Left ventricle myocardium inferior (tissue), 1 donor: ENCODE measurements at regions of chr1 and their contacts with region 1.

Region 1: GRCh38 chr1:198088360-198089071 is 68.3 kb upstream of the NEK7 start:
- DNase-seq: no peak
- H3K4me3 ChIP-seq: no peak overlapping the region
- H3K27ac ChIP-seq: no peak overlapping the region
- H3K4me1 ChIP-seq: no peaks in the 10 kb centered on the region
- H3K27me3 ChIP-seq: no peaks in the 10 kb centered on the region
- CTCF ChIP-seq: peak; percentile 72

Region 2: GRCh38 chr1:197775282-197776262 is 312.9 kb before region 1 on chr1 and contains the start of gene DENND1B:
- intact Hi-C with region 1: no loop called
- DNase-seq: peak; percentile 74
- H3K4me3 ChIP-seq: peak within 1 kb of the TSS; percentile 81
- H3K27ac ChIP-seq: peak within 1 kb of the TSS; percentile 96
- H3K4me1 ChIP-seq: peaks cover 52% of the 10 kb centered on the region
- H3K27me3 ChIP-seq: no peaks in the 10 kb centered on the region
- CTCF ChIP-seq: peak; percentile 15
- total RNA-seq, gene DENND1B: 26.9 TPM

Region 3: GRCh38 chr1:198175423-198176170 is 87.1 kb after region 1 on chr1:
- intact Hi-C with region 1: no loop called
- DNase-seq: no peak
- H3K4me3 ChIP-seq: no peak overlapping the region
- H3K27ac ChIP-seq: peak overlapping the region; percentile 15
- H3K4me1 ChIP-seq: peaks cover 100% of the 10 kb centered on the region
- H3K27me3 ChIP-seq: no peaks in the 10 kb centered on the region
- CTCF ChIP-seq: no peak

Region 4: GRCh38 chr1:198359024-198359653 is 270.6 kb after region 1 on chr1:
- intact Hi-C with region 1: loop called (anchors 5 kb)
- DNase-seq: no peak
- H3K4me3 ChIP-seq: no peak overlapping the region
- H3K27ac ChIP-seq: no peak overlapping the region
- H3K4me1 ChIP-seq: no peaks in the 10 kb centered on the region
- H3K27me3 ChIP-seq: no peaks in the 10 kb centered on the region
- CTCF ChIP-seq: peak; percentile 66

Region 5: GRCh38 chr1:198465201-198466144 is 377.0 kb after region 1 on chr1:
- intact Hi-C with region 1: loop called (anchors 10 kb)
- DNase-seq: no peak
- H3K4me3 ChIP-seq: no peak overlapping the region
- H3K27ac ChIP-seq: no peak overlapping the region
- H3K4me1 ChIP-seq: no peaks in the 10 kb centered on the region
- H3K27me3 ChIP-seq: no peaks in the 10 kb centered on the region
- CTCF ChIP-seq: peak; percentile 74